ENCODE measurements at regions of chr6 and their contacts with region 1.

Region 1: GRCh38 chr6:159174263-159174969 is 5.2 kb downstream of the FNDC1 start:
- DNase-seq: peak; percentile 86
- ATAC-seq: peak; percentile 89
- H3K4me3 Mint-ChIP-seq: no peak overlapping the region
- H3K27ac Mint-ChIP-seq: no peak overlapping the region
- H3K4me1 Mint-ChIP-seq: peaks cover 9% of the 10 kb centered on the region
- H3K27me3 Mint-ChIP-seq: peaks cover 50% of the 10 kb centered on the region

Region 2: DNA sequence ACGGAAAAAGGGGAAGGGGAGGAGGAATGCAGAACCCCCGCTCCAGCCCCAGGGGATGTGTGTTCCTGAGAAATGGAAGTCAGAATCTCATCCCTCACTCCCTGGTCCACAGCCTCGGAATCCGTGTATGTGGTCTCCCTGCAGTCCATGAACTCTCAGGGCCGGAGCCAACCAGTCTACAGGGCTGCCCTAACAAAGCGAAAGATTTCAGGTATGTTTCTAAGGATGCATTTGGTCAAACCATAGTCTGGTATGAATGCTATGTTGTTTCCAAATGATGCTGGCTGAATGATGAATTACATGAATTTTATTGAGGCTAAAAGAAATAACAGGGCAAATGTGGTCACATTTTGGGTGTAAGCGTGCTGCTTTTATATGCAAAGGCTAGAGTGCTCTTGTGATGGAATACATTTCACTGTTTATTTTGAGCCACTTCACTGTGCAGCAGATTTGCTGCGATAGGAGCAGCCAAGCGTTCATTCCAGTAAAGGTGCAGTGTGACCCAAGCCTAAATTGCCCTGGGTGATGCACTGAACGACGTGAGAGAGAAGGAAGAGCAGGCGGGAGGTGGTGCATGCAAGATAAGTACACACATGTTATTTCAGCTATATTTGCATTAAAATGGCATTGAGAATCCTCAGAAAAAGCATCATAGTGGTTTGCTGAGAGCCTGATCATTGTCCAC is 47.2 kb after region 1 on chr6:
- CTCF ChIA-PET with region 1: interaction called, 7 read pairs
- POLR2A ChIA-PET with region 1: no interaction called
- intact Hi-C with region 1: loop called in 1 of 2 experiments (anchors 5 kb)
- DNase-seq: no peak
- ATAC-seq: no peak
- H3K4me3 Mint-ChIP-seq: no peak overlapping the region
- H3K27ac Mint-ChIP-seq: no peak overlapping the region
- H3K4me1 Mint-ChIP-seq: no peaks in the 10 kb centered on the region
- H3K27me3 Mint-ChIP-seq: peaks cover 13% of the 10 kb centered on the region

Region 3: DNA sequence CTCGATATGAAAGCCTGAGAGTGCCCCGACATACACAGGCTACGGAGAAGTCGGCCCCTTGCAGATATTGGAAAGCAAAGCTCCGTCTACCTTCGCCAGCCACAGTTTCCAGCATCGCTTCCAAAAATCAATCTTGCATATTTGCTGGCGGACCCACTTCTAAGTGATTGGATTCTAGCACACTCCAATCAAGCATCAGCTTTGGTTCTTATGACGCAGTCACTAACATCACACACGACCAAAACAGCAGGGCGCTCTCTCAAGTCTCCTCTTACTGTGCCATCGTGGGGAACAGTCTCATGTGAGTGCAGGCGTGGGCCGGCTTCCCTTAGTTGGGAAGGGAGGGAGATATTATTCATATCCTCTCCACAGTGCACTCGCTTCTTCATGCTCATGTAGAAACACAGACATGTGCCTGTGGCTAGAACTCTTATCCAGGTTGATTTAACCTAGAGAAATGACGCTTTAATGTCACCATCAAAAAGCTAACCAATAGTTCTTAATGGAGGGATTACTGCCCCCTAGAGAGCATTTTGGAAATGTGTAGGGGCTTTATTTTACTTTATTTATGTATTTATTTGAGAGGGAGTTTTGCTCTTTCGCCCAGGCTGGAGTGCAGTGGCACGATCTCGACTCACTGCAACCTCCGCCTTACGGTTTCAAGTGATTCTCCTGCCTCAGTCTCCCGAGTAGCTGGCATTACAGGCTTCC is 288.9 kb after region 1 on chr6:
- CTCF ChIA-PET with region 1: interaction called, 5 read pairs
- POLR2A ChIA-PET with region 1: no interaction called
- intact Hi-C with region 1: loop called (anchors 1 to 5 kb)
- DNase-seq: no peak
- ATAC-seq: no peak
- H3K4me3 Mint-ChIP-seq: no peak overlapping the region
- H3K27ac Mint-ChIP-seq: no peak overlapping the region
- H3K4me1 Mint-ChIP-seq: peaks cover 3% of the 10 kb centered on the region
- H3K27me3 Mint-ChIP-seq: peaks cover 11% of the 10 kb centered on the region

Region 4: GRCh38 chr6:159654483-159655098 is 480.2 kb after region 1 on chr6:
- CTCF ChIA-PET with region 1: interaction called, 44 read pairs
- POLR2A ChIA-PET with region 1: no interaction called
- intact Hi-C with region 1: loop called (anchors 1 kb)
- DNase-seq: no peak
- ATAC-seq: no peak
- H3K4me3 Mint-ChIP-seq: no peak overlapping the region
- H3K27ac Mint-ChIP-seq: no peak overlapping the region
- H3K4me1 Mint-ChIP-seq: no peaks in the 10 kb centered on the region
- H3K27me3 Mint-ChIP-seq: no peaks in the 10 kb centered on the region

Measured in activated CD4-positive, alpha-beta T cell treated with anti-CD3 and anti-CD28 coated beads for 36 hours (primary cell).